Naive thymus-derived CD4-positive, alpha-beta T cell (primary cell): ENCODE measurements at regions of chr14 and their contacts with region 1.

Region 1: DNA sequence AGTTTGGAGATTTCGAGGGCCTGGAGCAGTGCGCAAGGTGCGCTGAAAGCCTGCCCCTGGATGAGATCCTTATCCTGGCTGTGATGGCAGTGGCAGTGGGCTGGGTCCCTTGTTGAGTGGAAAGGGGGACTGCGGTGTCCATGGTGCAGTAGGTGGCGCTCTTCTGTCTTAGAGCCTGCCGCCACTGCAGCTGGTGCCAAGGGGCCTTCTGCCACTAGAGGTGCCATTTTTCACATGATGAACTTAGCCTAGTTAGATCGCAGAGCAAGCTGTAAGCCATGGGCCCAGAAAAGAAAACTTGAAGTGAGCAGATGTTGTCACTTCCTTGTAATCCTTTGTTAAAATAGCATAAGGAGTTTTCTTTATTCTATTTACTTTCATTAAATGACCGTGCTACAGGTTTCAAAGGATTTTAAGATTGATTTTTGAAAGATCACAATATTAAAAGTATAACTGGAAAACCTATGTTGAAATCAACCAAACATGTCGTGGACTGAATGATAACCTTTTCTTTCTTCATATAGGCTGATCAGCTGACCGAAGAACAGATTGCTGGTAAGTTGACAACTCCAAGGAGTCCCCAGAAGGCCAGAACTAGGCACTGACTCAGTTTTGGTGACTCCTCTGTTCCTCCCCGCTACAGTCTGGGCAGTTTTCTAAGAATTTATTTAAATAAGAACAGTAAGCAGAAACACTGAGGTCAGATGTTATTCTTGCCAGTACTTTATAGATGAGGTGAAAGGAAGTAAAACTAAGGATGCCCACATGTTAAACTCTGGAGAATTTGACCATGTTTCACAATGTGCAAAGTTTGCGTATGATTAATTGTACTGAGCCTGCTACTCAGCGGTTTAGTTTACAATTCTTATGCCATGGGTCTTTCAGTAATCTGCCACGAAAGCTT is 3.0 kb downstream of the CALM1 start:
- DNase-seq: peak; percentile 60 to 89 (median 85)
- ATAC-seq: peak; percentile 69
- H3K4me3 ChIP-seq: peak overlapping the region; percentile 78
- H3K4me3 Mint-ChIP-seq: peak overlapping the region; percentile 91 to 100 (median 98)
- H3K27ac ChIP-seq: peak overlapping the region; percentile 92
- H3K27ac Mint-ChIP-seq: peak overlapping the region; percentile 38 to 100 (median 99)
- H3K4me1 ChIP-seq: peaks cover 49 to 50% of the 10 kb centered on the region in 2 donors
- H3K4me1 Mint-ChIP-seq: peaks cover 45 to 70% (median 62%) of the 10 kb centered on the region in 7 donors
- H3K27me3 ChIP-seq: no peaks in the 10 kb centered on the region
- H3K27me3 Mint-ChIP-seq: peaks cover 0 to 7% (median 0%) of the 10 kb centered on the region in 5 donors

Region 2: DNA sequence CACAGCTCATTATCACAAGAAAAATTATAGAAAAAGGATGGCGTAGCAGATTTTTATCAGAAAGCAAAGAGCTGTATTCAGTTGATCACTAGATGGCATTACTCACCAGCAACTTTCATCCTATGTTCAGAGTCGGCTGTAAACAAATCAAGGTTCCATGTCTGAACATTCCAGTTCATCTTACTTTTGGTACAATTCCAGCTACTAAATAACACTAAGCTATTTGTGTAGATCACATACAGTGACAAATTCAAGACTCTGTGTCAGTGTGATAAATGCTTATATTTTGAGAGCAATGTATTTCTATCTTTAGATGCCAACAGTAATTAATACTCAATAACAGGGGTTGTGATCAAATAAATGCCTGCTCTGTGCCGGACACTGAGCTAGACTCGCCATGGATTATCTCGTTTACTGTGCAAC is 98.1 kb before region 1 on chr14:
- CTCF ChIA-PET with region 1: interaction called, 7 read pairs
- POLR2A ChIA-PET with region 1: no interaction called
- intact Hi-C with region 1: loop called in 1 of 2 experiments (anchors 1 kb)
- DNase-seq: peak in 4 of 9 donors; percentile 2 to 28 (median 16)
- ATAC-seq: no peak
- H3K4me3 ChIP-seq: no peak overlapping the region
- H3K4me3 Mint-ChIP-seq: no peak overlapping the region
- H3K27ac ChIP-seq: no peak overlapping the region
- H3K27ac Mint-ChIP-seq: peak overlapping the region in 7 of 9 donors; percentile 26 to 82 (median 56)
- H3K4me1 ChIP-seq: no peaks in the 10 kb centered on the region
- H3K4me1 Mint-ChIP-seq: peaks cover 13 to 31% (median 20%) of the 10 kb centered on the region in 7 donors
- H3K27me3 ChIP-seq: no peaks in the 10 kb centered on the region
- H3K27me3 Mint-ChIP-seq: no peaks in the 10 kb centered on the region

Region 3: DNA sequence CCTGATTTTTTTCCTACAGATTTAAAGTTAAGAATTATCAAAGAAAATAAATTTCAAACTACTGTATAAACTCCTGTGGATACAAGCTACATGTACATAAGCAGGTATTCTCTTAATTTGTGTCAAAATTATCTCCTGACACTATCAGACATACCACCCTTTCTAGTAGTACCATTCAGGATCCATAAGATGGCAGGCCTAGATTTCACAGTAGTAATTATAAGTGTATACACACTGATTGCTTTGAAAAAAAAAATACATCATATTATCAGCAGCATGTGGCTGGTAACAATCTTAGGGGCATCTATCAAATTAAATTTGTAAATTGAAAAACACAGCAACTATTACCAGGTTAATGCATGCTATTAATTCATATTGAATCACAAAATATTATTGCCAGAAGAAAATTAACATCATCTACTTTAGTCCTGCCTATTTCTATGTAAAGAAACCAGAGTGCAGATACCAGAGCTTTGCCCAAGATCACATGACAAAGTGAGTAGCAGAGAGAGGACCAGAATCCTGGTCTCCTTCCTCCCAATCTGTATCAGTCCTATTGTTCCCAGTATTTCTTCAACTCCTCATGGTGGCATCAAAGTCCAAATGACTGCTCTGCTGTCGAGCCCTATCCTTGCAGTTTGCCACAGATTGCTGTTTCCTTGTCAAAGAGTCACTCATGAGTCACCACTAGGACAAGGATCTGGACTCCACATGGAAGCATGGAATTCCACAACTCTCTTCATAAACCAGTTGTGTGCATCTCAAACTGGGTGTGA is 30.7 kb before region 1 on chr14:
- CTCF ChIA-PET with region 1: interaction called, 12 read pairs
- POLR2A ChIA-PET with region 1: interaction called, 15 read pairs
- intact Hi-C with region 1: loop called (anchors 1 kb)
- DNase-seq: peak in 7 of 9 donors; percentile 25 to 60 (median 39)
- ATAC-seq: peak; percentile 90
- H3K4me3 ChIP-seq: no peak overlapping the region
- H3K4me3 Mint-ChIP-seq: no peak overlapping the region
- H3K27ac ChIP-seq: no peak overlapping the region
- H3K27ac Mint-ChIP-seq: no peak overlapping the region
- H3K4me1 ChIP-seq: no peaks in the 10 kb centered on the region
- H3K4me1 Mint-ChIP-seq: peaks cover 0 to 8% (median 4%) of the 10 kb centered on the region in 7 donors
- H3K27me3 ChIP-seq: no peaks in the 10 kb centered on the region
- H3K27me3 Mint-ChIP-seq: peaks cover 0 to 25% (median 0%) of the 10 kb centered on the region in 5 donors

Region 4: DNA sequence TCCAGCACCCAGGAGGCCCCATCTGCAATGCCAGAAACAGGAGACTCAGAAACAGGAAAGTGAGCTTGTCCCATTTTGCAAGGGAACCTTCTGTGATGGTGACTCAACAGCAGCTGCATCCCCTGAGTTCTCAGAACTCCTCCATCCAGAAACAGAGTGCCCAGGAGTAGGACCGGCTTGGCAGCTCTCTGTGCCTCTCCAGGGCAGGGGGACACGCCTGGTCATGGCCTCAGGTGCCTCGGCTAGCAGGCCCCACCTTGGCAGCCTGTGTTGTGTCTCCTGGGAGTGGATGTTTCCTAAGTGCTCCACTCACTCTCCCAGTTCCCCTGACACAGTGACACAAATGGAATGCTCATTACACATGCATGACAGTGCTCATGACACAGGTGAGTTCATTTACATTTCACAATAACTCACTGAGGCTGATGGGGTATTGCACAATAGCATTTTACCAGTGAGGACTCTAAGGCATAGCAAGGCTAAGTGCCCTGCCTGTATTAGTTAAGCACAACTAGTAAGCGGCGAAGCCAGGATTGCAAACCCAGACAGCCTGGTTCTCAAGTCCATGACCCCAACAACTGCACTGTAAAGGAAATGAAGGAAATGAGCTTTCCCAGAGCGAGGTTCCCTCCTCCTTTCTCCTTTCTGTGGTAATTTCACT is 44.4 kb after region 1 on chr14:
- CTCF ChIA-PET with region 1: no interaction called
- POLR2A ChIA-PET with region 1: no interaction called
- intact Hi-C with region 1: no loop called
- DNase-seq: no peak
- ATAC-seq: no peak
- H3K4me3 ChIP-seq: no peak overlapping the region
- H3K4me3 Mint-ChIP-seq: no peak overlapping the region
- H3K27ac ChIP-seq: no peak overlapping the region
- H3K27ac Mint-ChIP-seq: no peak overlapping the region
- H3K4me1 ChIP-seq: no peaks in the 10 kb centered on the region
- H3K4me1 Mint-ChIP-seq: peaks cover 0 to 7% (median 0%) of the 10 kb centered on the region in 7 donors
- H3K27me3 ChIP-seq: no peaks in the 10 kb centered on the region
- H3K27me3 Mint-ChIP-seq: peaks cover 0 to 6% (median 3%) of the 10 kb centered on the region in 5 donors

Region 5: GRCh38 chr14:90518941-90519256 is 119.1 kb after region 1 on chr14:
- CTCF ChIA-PET with region 1: no interaction called
- POLR2A ChIA-PET with region 1: no interaction called
- intact Hi-C with region 1: loop called (anchors 1 to 2 kb)
- DNase-seq: peak in 8 of 9 donors; percentile 21 to 59 (median 50)
- ATAC-seq: peak; percentile 65
- H3K4me3 ChIP-seq: no peak overlapping the region
- H3K4me3 Mint-ChIP-seq: no peak overlapping the region
- H3K27ac ChIP-seq: no peak overlapping the region
- H3K27ac Mint-ChIP-seq: no peak overlapping the region
- H3K4me1 ChIP-seq: no peaks in the 10 kb centered on the region
- H3K4me1 Mint-ChIP-seq: no peaks in the 10 kb centered on the region
- H3K27me3 ChIP-seq: no peaks in the 10 kb centered on the region
- H3K27me3 Mint-ChIP-seq: peaks cover 0 to 7% (median 0%) of the 10 kb centered on the region in 5 donors

Region 6: DNA sequence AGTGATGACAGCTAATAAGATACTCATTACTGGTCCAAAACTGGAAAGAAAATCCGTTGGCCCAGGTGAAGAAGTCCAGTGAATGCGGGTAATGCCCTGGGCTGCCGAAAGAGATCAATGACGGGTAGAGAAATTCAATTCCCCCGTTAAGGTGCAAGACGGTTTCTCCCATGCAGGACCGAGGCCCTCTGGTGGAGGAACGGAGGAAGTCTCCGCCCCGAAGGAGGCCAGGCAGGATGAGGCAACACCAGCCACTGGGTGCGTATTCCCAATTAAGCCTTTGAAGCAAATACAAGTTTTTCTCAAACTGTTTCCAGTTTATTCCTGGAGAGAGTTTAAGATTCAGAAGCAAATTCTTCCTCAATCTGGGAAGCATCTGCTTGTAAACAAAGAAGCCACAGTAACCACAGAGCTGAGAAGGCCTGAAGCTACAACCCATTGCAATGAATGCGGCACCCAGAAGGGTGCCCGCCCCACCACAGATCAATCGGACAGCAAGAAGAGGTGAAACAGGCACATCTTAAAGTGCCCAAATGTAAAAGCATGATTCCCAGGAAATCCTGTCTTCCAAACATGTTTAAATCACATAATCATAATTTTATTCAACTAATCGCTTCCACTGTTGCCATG is 297.9 kb after region 1 on chr14:
- CTCF ChIA-PET with region 1: interaction called, 8 read pairs
- POLR2A ChIA-PET with region 1: interaction called, 13 read pairs
- intact Hi-C with region 1: loop called (anchors 1 kb)
- DNase-seq: peak; percentile 48 to 75 (median 70)
- ATAC-seq: peak; percentile 91
- H3K4me3 ChIP-seq: no peak overlapping the region
- H3K4me3 Mint-ChIP-seq: no peak overlapping the region
- H3K27ac ChIP-seq: no peak overlapping the region
- H3K27ac Mint-ChIP-seq: no peak overlapping the region
- H3K4me1 ChIP-seq: no peaks in the 10 kb centered on the region
- H3K4me1 Mint-ChIP-seq: peaks cover 0 to 5% (median 0%) of the 10 kb centered on the region in 7 donors
- H3K27me3 ChIP-seq: no peaks in the 10 kb centered on the region
- H3K27me3 Mint-ChIP-seq: no peaks in the 10 kb centered on the region

Region 7: GRCh38 chr14:90827916-90828610 is 428.3 kb after region 1 on chr14:
- CTCF ChIA-PET with region 1: no interaction called
- POLR2A ChIA-PET with region 1: no interaction called
- intact Hi-C with region 1: loop called (anchors 1 to 5 kb)
- DNase-seq: peak; percentile 83 to 94 (median 85)
- ATAC-seq: peak; percentile 100
- H3K4me3 ChIP-seq: peak overlapping the region; percentile 61
- H3K4me3 Mint-ChIP-seq: peak overlapping the region; percentile 69 to 91 (median 84)
- H3K27ac ChIP-seq: peak overlapping the region; percentile 69
- H3K27ac Mint-ChIP-seq: peak overlapping the region; percentile 79 to 96 (median 86)
- H3K4me1 ChIP-seq: peaks cover 14% of the 10 kb centered on the region in 2 donors
- H3K4me1 Mint-ChIP-seq: peaks cover 7 to 28% (median 18%) of the 10 kb centered on the region in 7 donors
- H3K27me3 ChIP-seq: no peaks in the 10 kb centered on the region
- H3K27me3 Mint-ChIP-seq: peaks cover 0 to 3% (median 0%) of the 10 kb centered on the region in 5 donors